ENCODE measurements at regions of chr3 and their contacts with region 1.

Region 1: DNA sequence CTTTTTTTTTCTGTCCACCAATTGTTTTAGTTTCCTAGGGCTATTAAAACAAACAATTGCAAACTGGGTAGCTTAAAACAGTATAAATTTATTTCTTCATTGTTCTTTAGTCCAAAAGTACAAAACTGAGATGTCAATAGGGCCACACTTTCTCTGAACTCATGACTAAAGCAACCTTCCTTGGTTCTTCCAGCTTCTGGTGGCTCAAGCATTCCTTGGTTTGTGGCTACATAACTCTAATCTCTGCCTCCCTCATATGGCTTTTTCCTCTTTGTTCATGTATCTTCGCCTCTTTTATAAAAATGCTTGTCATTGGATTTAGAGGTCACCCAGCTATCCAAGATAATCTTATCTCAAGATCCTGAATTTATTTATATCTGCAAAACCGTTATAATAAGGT is 914.5 kb upstream of the EPHA6 start:
- DNase-seq: no peak
- H3K4me3 ChIP-seq: no peak overlapping the region
- H3K27ac ChIP-seq: no peak overlapping the region
- H3K4me1 ChIP-seq: no peaks in the 10 kb centered on the region
- H3K27me3 ChIP-seq: no peaks in the 10 kb centered on the region
- CTCF ChIP-seq: no peak

Region 2: GRCh38 chr3:95939235-95939809 is 39.4 kb after region 1 on chr3:
- intact Hi-C with region 1: loop called (anchors 5 kb)
- DNase-seq: no peak
- H3K4me3 ChIP-seq: no peak overlapping the region
- H3K27ac ChIP-seq: no peak overlapping the region
- H3K4me1 ChIP-seq: no peaks in the 10 kb centered on the region
- H3K27me3 ChIP-seq: no peaks in the 10 kb centered on the region
- CTCF ChIP-seq: no peak

Region 3: DNA sequence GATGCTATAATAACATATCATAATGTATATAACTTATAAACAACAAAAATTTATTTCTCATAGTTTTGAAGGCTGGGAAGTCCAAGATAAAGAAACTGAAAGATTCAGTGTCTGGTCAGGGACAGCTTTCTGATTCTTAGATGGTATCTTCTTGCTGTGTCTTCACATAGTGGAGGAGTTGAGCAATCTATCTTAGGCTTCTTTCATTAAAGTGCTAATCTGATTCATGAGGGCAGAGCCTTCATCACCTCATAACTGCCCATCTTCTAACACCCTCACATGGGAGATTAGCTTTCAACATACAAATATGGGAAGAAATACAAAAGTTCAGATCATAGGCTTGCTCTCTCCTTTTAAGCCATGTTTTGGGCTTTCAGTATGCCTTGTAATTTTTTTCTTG is 139.7 kb after region 1 on chr3:
- intact Hi-C with region 1: no loop called
- DNase-seq: no peak
- H3K4me3 ChIP-seq: no peak overlapping the region
- H3K27ac ChIP-seq: no peak overlapping the region
- H3K4me1 ChIP-seq: no peaks in the 10 kb centered on the region
- H3K27me3 ChIP-seq: no peaks in the 10 kb centered on the region
- CTCF ChIP-seq: no peak